ENCODE measurements at regions of chr17 and their contacts with region 1.

Region 1: GRCh38 chr17:1684378-1685189 is at the start of gene PRPF8:
- DNase-seq: peak; percentile 98
- H3K4me3 Mint-ChIP-seq: peak within 1 kb of the TSS; percentile 92
- H3K27ac Mint-ChIP-seq: peak within 1 kb of the TSS; percentile 92
- H3K4me1 Mint-ChIP-seq: peaks cover 34% of the 10 kb centered on the region
- H3K27me3 Mint-ChIP-seq: no peaks in the 10 kb centered on the region
- total RNA-seq, gene PRPF8: 302 to 316 TPM

Region 2: DNA sequence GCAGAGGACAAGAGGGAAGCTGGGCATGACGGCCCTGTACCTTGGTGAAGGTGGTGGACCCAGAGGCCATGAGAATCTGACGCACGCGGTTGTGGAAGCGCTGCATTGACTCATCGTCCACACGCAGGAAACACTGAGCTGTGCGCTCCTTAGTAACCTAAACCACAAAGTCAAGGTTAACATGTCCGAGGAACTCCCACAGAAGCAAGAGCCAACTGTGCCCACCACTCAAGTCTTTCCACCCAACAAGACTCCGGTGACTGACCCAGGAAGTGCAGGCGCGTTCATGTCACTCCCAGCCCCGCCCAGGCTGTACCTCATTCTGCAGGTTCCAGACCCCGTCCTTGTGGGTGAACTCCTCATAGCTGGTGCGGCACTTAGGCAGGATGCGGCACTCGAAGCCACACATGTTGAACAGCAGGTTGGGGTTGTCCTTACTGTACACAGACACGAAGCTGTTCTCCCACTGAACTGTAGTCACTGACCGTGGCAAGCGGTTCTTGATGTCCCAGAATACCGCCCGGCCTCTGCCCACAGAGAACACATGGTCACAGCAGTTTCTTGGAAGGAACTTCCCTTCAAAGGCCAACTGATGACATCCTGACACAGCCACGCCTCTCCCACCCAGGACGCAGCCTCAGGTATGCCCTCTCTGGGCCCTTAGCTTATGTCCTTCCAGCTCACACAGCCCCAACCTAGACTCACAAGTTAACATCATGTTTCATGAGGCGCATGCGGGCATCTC is 11.4 kb before region 1 on chr17:
- CTCF ChIA-PET with region 1: interaction called, 10 read pairs
- POLR2A ChIA-PET with region 1: no interaction called
- DNase-seq: peak; percentile 20
- H3K4me3 Mint-ChIP-seq: no peak overlapping the region
- H3K27ac Mint-ChIP-seq: peak overlapping the region; percentile 34
- H3K4me1 Mint-ChIP-seq: peaks cover 13% of the 10 kb centered on the region
- H3K27me3 Mint-ChIP-seq: no peaks in the 10 kb centered on the region

Region 3: DNA sequence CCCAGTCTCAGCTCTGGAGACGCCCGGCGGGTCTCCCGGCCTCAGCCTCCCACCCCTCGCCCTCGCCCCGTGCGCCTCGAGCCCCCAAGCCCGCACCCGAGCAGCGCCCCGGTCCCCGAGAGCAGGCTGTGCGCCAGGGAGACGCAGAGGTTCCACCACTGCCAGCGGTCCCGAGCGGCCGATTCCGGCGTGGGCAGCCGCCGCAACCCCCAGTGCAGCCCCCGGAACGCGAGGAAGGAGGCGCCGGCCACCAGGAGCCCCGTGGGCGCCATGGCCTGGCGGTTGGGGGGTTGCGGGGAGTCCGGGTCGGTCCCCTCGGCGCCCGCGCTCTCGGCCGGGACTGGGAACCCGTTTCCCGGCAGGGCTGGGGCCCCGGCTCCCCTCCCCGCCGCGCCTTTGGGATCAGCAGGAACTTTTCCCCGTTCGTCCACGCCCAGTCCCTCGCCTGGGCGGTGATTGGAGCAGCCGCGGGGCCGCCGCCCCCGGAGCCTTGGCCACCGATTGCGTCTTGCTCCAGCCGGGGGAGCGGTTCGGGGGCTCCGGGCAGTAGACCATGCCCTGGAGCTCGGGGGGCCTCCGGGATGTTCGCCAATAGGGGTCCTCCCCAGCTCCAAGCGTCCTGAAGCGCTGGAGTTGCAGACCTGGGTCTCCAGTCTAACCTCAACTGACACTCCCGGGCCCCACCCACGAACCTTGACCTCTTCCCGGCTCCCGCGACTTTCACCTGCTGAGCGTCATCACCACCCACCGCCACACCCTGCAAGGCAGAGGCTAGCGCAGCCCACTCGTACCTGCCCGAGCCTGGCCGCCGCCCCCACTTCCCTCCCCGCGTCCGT is 25.6 kb after region 1 on chr17 and contains the start of gene TLCD2:
- CTCF ChIA-PET with region 1: no interaction called
- POLR2A ChIA-PET with region 1: no interaction called
- DNase-seq: no peak
- H3K4me3 Mint-ChIP-seq: peak within 1 kb of the TSS; percentile 47
- H3K27ac Mint-ChIP-seq: peak within 1 kb of the TSS; percentile 31
- H3K4me1 Mint-ChIP-seq: peaks cover 30% of the 10 kb centered on the region
- H3K27me3 Mint-ChIP-seq: peaks cover 40% of the 10 kb centered on the region
- total RNA-seq, gene TLCD2: 0.07 to 0.12 TPM

Region 4: GRCh38 chr17:1724506-1725362 is 40.1 kb after region 1 on chr17 and contains the start of gene WDR81:
- CTCF ChIA-PET with region 1: no interaction called
- POLR2A ChIA-PET with region 1: no interaction called
- DNase-seq: peak; percentile 91
- H3K4me3 Mint-ChIP-seq: peak within 1 kb of the TSS; percentile 76
- H3K27ac Mint-ChIP-seq: peak within 1 kb of the TSS; percentile 87
- H3K4me1 Mint-ChIP-seq: peaks cover 55% of the 10 kb centered on the region
- H3K27me3 Mint-ChIP-seq: no peaks in the 10 kb centered on the region
- total RNA-seq, gene WDR81: 50.7 to 57.9 TPM

Region 5: DNA sequence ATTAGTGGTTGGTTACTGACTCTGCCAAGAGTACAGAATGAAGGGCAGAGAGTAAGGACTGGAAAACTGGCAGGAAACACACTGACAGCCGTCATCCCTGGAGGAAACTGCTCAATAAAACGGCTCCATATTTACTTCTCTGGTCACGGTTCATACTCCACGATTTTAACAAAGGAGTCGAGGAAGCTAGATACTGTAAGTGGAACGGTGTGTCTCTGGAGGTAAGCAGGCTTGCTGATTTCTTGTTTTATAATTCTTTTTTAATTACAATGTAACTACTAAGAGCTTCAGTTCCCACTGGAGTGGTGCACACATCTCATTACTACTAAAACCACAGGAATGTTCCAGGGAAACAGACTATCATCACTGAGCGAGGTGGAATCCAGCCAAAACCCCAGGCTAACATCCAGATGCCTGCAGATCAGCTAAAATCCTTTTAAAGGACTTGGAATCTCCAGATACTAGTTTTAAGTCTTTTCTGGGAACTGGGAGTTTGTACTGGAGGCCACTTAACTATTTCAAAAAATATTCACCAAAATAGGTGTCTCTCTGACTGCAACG is 95.1 kb after region 1 on chr17:
- CTCF ChIA-PET with region 1: no interaction called
- POLR2A ChIA-PET with region 1: no interaction called
- DNase-seq: no peak
- H3K4me3 Mint-ChIP-seq: no peak overlapping the region
- H3K27ac Mint-ChIP-seq: no peak overlapping the region
- H3K4me1 Mint-ChIP-seq: peaks cover 25% of the 10 kb centered on the region
- H3K27me3 Mint-ChIP-seq: no peaks in the 10 kb centered on the region

Measured in activated CD4-positive, alpha-beta T cell treated with anti-CD3 and anti-CD28 coated beads, Interleukin-2, amount 10 ng/mL, durations not matched to agents 7 days and 5 days (primary cell).